Activated naive CD4-positive, alpha-beta T cell treated with anti-CD3 and anti-CD28 coated beads for 36 hours (primary cell): ENCODE measurements at regions of chr22 and their contacts with region 1.

Region 1: GRCh38 chr22:20568989-20569769 is 61.8 kb downstream of the MED15 start:
- DNase-seq: peak; percentile 62
- H3K4me3 Mint-ChIP-seq: no peak overlapping the region
- H3K27ac Mint-ChIP-seq: no peak overlapping the region
- H3K4me1 Mint-ChIP-seq: peaks cover 71% of the 10 kb centered on the region
- H3K27me3 Mint-ChIP-seq: no peaks in the 10 kb centered on the region

Region 2: DNA sequence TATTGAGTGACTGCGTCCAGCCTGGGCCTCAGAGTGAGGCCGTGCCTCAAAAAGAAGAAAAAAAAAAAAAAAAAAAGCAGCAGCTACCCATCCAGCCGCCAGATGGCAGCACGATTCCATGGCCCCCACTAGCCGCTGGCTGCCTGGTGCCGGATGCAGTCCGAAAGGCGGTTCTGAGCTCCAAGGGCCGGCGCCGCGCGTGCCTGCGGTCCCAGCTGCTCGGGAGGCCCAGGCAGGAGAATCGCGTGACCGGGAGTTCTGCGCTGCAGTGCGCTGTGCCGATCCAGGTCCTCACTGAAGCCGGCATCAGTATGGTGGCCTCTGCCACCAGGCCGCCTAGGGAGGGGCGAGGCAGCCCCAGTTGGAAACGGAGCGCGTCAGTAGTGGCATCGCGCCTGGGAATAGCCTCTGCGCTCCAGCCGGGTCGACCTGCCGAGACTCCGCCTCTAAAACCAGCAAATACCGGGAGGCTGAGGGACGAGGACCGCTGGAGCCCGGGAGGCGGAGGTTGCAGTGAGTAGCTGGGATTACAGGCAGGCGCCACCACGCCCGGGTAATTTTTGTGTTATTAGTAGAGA is 150.9 kb before region 1 on chr22:
- CTCF ChIA-PET with region 1: interaction called, 4 read pairs
- intact Hi-C with region 1: loop called (anchors 5 kb)
- DNase-seq: peak; percentile 70
- H3K4me3 Mint-ChIP-seq: no peak overlapping the region
- H3K27ac Mint-ChIP-seq: no peak overlapping the region
- H3K4me1 Mint-ChIP-seq: no peaks in the 10 kb centered on the region
- H3K27me3 Mint-ChIP-seq: peaks cover under 1% of the 10 kb centered on the region

Region 3: DNA sequence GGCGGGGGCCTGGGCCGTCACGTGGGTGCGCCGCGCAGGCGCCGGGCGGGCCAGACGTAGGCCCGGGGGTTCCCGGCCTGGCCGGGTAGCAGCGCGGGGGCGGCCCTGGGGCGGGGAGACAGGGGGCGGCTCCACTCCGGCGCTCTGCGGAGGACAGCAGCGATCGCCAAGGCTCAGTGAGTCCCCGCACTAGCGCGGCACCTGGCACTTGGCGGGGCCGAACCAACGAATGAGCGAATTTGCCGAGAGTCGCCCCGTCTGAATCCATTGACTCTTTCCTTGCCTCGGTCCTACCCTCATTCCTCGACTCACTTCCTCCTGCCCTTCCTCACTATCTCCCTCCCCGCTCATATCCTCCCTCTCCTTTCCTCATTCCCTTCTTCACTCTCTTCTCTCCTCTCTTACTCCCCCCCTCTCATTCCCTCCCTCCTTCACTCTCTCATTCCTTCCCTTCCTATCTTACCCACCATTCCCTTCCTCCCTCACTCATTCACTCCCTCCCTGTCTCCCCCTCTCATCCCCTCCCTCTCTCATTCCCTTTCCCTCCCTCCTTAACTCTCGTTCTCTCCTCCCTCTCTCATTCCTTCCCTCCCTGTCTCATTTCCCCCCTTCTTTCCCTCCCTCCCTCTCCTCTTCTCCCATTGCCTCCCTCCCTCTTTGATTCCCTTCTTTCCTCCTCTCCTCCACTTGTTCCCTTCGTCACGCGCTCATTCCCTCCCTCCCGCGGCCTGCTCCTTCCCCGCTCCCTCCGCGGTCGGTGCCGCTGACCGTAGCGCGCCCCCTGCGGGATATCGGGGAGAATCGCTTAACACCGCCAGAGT is 73.1 kb before region 1 on chr22:
- CTCF ChIA-PET with region 1: interaction called, 13 read pairs
- intact Hi-C with region 1: no loop called
- DNase-seq: peak; percentile 92
- H3K4me3 Mint-ChIP-seq: peak overlapping the region; percentile 90
- H3K27ac Mint-ChIP-seq: peak overlapping the region; percentile 81
- H3K4me1 Mint-ChIP-seq: peaks cover 35% of the 10 kb centered on the region
- H3K27me3 Mint-ChIP-seq: no peaks in the 10 kb centered on the region

Region 4: GRCh38 chr22:20514658-20515406 is 54.3 kb before region 1 on chr22:
- CTCF ChIA-PET with region 1: interaction called, 22 read pairs
- intact Hi-C with region 1: no loop called
- DNase-seq: no peak
- H3K4me3 Mint-ChIP-seq: no peak overlapping the region
- H3K27ac Mint-ChIP-seq: peak overlapping the region; percentile 56
- H3K4me1 Mint-ChIP-seq: peaks cover 83% of the 10 kb centered on the region
- H3K27me3 Mint-ChIP-seq: no peaks in the 10 kb centered on the region

Region 5: GRCh38 chr22:20550821-20551744 is 18.1 kb before region 1 on chr22:
- CTCF ChIA-PET with region 1: interaction called, 115 read pairs
- intact Hi-C with region 1: loop called (anchors 2 kb)
- DNase-seq: peak; percentile 87
- H3K4me3 Mint-ChIP-seq: peak overlapping the region; percentile 70
- H3K27ac Mint-ChIP-seq: peak overlapping the region; percentile 100
- H3K4me1 Mint-ChIP-seq: peaks cover 93% of the 10 kb centered on the region
- H3K27me3 Mint-ChIP-seq: no peaks in the 10 kb centered on the region

Region 6: DNA sequence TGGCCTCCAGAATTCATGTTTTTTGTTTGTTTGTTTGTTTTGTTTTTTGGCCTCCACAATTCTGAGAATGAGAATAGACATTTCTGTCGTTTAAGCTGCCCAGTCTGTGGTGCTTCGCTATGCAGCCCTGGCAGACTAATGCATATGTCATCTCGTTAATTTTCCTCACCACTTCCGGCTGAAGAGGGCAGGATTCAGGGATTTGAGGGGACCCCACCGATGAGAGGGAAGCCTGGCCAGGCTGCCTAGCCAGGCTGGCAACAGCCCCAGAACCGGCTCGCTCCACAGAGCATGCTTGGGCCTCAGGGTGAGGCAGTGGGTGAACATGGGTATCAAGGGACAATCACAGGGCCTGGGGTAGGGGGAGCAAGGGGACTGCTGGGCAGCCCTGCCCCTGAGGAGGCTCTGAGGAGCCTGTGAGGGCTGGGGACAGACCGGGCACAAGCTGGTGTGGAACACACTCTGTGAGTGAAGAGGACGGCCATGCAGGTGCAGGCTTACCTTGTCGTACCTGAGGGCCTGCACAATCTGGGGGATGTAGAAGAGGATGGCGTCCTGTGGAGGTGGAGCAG is 156.9 kb after region 1 on chr22:
- CTCF ChIA-PET with region 1: no interaction called
- intact Hi-C with region 1: no loop called
- DNase-seq: no peak
- H3K4me3 Mint-ChIP-seq: no peak overlapping the region
- H3K27ac Mint-ChIP-seq: no peak overlapping the region
- H3K4me1 Mint-ChIP-seq: no peaks in the 10 kb centered on the region
- H3K27me3 Mint-ChIP-seq: no peaks in the 10 kb centered on the region

Region 7: DNA sequence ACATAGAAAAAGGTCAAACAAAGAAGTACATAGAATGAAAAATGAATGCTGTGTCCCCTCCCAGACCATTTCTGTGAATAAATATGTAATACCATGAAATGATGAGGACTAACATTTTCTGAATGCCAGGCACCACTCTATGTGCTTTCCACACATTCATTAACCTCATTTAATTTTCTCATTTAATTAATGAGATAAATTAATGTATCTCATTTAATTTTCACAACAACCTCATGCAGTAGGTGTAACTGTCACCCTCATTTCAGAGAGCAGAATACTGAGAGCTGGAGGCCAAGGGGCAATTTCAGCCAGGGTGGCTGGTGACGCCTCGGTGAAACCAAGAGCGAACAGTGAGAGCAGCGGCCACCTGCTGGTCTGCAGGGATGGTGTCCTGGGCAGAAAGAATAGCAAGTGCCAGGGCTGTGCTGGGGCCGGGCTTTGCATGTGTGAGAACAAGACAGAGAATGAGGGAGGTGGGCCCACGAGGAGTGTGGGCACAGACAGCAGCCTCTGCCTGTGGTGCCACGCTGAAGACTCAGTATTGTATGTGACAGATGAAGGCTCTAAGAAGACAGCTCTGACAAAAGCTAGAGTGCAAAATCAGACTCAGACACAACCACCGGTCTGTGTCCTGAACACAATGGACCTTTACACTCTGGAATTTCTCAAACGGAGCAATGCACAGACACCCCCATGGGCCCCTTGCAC is 202.9 kb after region 1 on chr22:
- CTCF ChIA-PET with region 1: no interaction called
- intact Hi-C with region 1: no loop called
- DNase-seq: no peak
- H3K4me3 Mint-ChIP-seq: no peak overlapping the region
- H3K27ac Mint-ChIP-seq: no peak overlapping the region
- H3K4me1 Mint-ChIP-seq: no peaks in the 10 kb centered on the region
- H3K27me3 Mint-ChIP-seq: no peaks in the 10 kb centered on the region

Region 8: DNA sequence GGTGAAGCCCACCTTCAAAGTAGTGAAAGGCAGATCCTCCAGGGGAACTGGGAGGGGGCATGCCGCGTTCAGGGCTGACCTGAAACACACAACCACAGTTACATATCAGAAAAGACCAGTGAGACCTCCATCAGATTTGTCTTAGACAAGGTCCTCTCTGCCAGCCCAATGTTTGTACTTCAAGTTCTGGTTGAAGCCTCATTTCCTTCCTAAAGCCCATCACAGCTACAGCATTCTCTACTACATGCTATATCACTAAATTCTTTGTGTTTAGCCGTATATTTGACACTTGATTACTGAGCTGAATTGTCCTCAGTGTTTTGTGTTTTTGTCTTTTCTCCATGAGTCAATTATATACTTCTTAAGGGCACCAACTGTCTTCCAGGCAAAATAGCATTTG is 249.3 kb after region 1 on chr22:
- CTCF ChIA-PET with region 1: no interaction called
- intact Hi-C with region 1: no loop called
- DNase-seq: no peak
- H3K4me3 Mint-ChIP-seq: no peak overlapping the region
- H3K27ac Mint-ChIP-seq: no peak overlapping the region
- H3K4me1 Mint-ChIP-seq: no peaks in the 10 kb centered on the region
- H3K27me3 Mint-ChIP-seq: no peaks in the 10 kb centered on the region